ENCODE measurements at regions of chr17 and their contacts with region 1.

Region 1: DNA sequence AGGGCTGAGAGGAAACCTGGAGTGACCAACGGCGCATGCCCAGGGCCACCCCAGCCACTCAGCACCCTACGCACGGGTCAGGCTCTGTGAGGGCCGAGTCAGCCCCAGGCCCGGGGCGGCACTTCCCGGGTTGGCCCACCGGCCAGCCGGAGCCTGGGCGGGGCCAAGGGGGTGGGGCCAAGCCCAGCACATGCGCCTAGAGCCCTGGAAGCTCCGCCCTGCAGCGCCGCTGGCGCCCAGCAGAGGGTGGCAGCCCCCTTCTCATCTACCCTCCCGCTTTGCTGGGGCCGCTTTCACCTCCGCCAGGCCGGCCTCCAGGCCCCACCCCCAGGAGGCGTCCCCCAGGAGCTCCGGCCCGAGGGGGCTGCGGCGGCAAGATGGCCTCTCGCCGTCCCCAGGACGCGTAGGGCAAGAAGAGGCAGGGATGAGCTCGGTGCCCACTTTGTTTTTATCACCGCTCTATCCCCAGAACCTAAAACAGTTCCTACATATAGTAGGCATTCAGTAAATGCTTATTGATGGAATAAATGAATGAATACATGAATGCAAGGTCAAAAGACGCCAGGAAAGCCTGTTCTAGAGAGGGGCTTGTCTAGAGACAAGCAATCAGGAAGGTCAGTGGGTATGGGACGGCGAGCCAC is 31.3 kb downstream of the MYO18A start:
- DNase-seq: peak; percentile 82 to 97 (median 89)
- ATAC-seq: peak; percentile 99
- H3K4me3 ChIP-seq: peak overlapping the region; percentile 58
- H3K4me3 Mint-ChIP-seq: peak overlapping the region; percentile 70 to 84 (median 77)
- H3K27ac ChIP-seq: peak overlapping the region; percentile 73
- H3K27ac Mint-ChIP-seq: peak overlapping the region; percentile 71 to 93 (median 87)
- H3K4me1 ChIP-seq: peaks cover 9 to 22% of the 10 kb centered on the region in 2 donors
- H3K4me1 Mint-ChIP-seq: peaks cover 37 to 59% (median 45%) of the 10 kb centered on the region in 7 donors
- H3K27me3 ChIP-seq: no peaks in the 10 kb centered on the region
- H3K27me3 Mint-ChIP-seq: no peaks in the 10 kb centered on the region

Region 2: GRCh38 chr17:29116804-29117772 is 31.8 kb before region 1 on chr17:
- CTCF ChIA-PET with region 1: interaction called, 27 read pairs
- POLR2A ChIA-PET with region 1: interaction called, 5 read pairs
- intact Hi-C with region 1: no loop called
- DNase-seq: peak; percentile 49 to 81 (median 69)
- ATAC-seq: peak; percentile 89
- H3K4me3 ChIP-seq: no peak overlapping the region
- H3K4me3 Mint-ChIP-seq: peak overlapping the region in 1 of 10 donors; percentile 44
- H3K27ac ChIP-seq: no peak overlapping the region
- H3K27ac Mint-ChIP-seq: peak overlapping the region in 5 of 9 donors; percentile 54 to 74 (median 61)
- H3K4me1 ChIP-seq: no peaks in the 10 kb centered on the region
- H3K4me1 Mint-ChIP-seq: peaks cover 0 to 11% (median 5%) of the 10 kb centered on the region in 7 donors
- H3K27me3 ChIP-seq: no peaks in the 10 kb centered on the region
- H3K27me3 Mint-ChIP-seq: no peaks in the 10 kb centered on the region

Region 3: DNA sequence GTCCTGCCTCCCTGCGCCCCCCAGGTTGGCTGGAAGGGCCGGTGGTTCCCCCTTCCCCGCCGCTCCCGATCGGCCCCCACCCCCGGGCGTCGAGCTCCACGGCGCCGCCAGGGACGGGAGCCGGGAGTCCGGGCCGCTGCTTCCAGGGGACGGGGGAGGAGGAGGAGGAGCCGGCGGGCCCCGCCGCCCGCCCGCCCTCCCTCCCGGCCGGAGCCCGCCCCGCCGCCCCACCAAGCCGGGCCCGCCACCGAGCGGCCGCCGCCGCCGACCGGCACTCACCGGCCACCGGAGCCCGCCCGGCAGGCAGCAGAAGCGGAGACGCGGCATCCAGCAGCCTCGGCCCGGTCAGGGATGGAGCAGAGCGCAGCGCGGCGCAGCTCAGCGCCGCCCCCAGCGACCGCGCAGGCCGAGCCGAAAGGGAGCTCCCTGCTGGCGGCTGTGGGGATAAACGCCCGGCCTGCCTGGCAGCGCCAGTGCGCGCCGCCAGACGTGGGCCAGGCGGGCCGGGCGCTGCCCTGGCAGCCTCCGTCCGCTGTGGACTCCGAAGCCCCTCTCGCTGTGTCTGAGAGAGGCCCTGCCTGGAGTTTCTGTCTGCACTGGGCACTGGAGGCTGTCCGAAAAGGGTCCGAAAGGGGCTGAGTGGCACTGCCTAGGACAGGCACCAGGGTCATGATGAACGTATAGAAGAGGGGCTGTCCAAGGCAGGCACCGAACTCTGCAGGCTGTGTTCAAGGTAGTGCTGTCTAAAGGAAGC is 31.3 kb after region 1 on chr17 and contains the start of gene MYO18A:
- CTCF ChIA-PET with region 1: interaction called, 230 read pairs
- POLR2A ChIA-PET with region 1: interaction called, 27 read pairs
- intact Hi-C with region 1: loop called (anchors 1 kb)
- DNase-seq: peak; percentile 58 to 85 (median 71)
- ATAC-seq: peak; percentile 98
- H3K4me3 ChIP-seq: peak within 1 kb of the TSS; percentile 37
- H3K4me3 Mint-ChIP-seq: peak within 1 kb of the TSS; percentile 40 to 82 (median 56)
- H3K27ac ChIP-seq: no peak within 1 kb of the TSS
- H3K27ac Mint-ChIP-seq: peak within 1 kb of the TSS in 7 of 9 donors; percentile 9 to 70 (median 48)
- H3K4me1 ChIP-seq: peaks cover 10 to 13% of the 10 kb centered on the region in 2 donors
- H3K4me1 Mint-ChIP-seq: peaks cover 5 to 33% (median 19%) of the 10 kb centered on the region in 7 donors
- H3K27me3 ChIP-seq: no peaks in the 10 kb centered on the region
- H3K27me3 Mint-ChIP-seq: peaks cover 0 to 13% (median 0%) of the 10 kb centered on the region in 5 donors
- total RNA-seq, gene MYO18A: 89.5 to 144 (median 103) TPM

Region 4: GRCh38 chr17:29369831-29370735 is 221.2 kb after region 1 on chr17:
- CTCF ChIA-PET with region 1: interaction called, 12 read pairs
- POLR2A ChIA-PET with region 1: no interaction called
- intact Hi-C with region 1: loop called in 1 of 2 experiments (anchors 1 kb)
- DNase-seq: peak; percentile 25 to 80 (median 67)
- ATAC-seq: peak; percentile 95
- H3K4me3 ChIP-seq: no peak overlapping the region
- H3K4me3 Mint-ChIP-seq: no peak overlapping the region
- H3K27ac ChIP-seq: peak overlapping the region; percentile 63
- H3K27ac Mint-ChIP-seq: no peak overlapping the region
- H3K4me1 ChIP-seq: no peaks in the 10 kb centered on the region
- H3K4me1 Mint-ChIP-seq: no peaks in the 10 kb centered on the region
- H3K27me3 ChIP-seq: no peaks in the 10 kb centered on the region
- H3K27me3 Mint-ChIP-seq: peaks cover 0 to 2% (median 0%) of the 10 kb centered on the region in 5 donors

Region 5: DNA sequence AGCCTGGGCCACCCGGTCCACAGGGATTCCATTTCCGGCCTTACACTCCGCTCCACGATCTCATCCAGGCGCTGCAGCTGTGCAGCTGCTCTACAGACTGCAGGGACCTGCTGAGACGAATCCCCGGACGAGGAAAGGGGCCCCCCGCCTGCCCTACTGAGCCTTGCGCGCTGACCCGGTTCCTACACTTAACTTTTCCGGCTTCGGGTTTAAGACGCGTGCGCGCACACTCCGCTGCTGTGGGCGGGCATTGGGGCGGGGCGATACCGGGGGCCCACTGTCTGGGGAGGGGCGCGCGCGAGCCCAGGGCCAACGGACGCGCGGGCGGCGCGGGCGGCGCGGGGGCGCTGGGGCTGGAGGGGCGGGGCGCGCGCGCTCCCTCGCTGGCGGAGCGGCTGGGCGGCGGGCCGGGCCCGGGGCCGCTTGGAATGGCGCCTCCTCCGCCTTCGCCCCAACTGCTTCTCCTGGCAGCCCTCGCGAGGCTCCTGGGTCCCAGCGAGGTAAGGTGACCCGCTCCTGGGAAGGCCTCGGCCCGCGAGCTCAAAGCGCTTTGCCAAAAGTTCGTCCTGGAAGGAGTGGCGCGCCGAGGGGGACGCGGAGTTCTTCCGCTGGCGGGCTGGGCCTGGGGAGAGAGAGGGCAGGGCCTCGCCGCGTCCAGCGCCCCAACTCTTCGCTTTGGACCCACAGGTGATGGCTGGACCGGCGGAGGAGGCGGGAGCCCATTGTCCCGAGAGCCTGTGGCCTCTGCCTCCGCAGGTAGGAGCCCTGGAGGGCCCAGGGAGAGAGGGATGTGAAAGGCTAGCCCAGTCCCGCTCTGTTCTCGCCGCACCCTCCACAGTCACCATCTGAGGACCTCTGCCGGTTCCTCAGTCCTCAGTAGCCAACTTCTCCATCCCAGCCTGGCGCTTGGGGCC is 419.7 kb after region 1 on chr17 and contains the start of gene TP53I13:
- CTCF ChIA-PET with region 1: no interaction called
- POLR2A ChIA-PET with region 1: no interaction called
- intact Hi-C with region 1: loop called (anchors 10 kb)
- DNase-seq: peak; percentile 65 to 90 (median 81)
- ATAC-seq: peak; percentile 81
- H3K4me3 ChIP-seq: peak within 1 kb of the TSS; percentile 89
- H3K4me3 Mint-ChIP-seq: peak within 1 kb of the TSS; percentile 88 to 99 (median 95)
- H3K27ac ChIP-seq: peak within 1 kb of the TSS; percentile 78
- H3K27ac Mint-ChIP-seq: peak within 1 kb of the TSS; percentile 82 to 97 (median 92)
- H3K4me1 ChIP-seq: peaks cover 12 to 30% of the 10 kb centered on the region in 2 donors
- H3K4me1 Mint-ChIP-seq: peaks cover 21 to 42% (median 32%) of the 10 kb centered on the region in 7 donors
- H3K27me3 ChIP-seq: no peaks in the 10 kb centered on the region
- H3K27me3 Mint-ChIP-seq: no peaks in the 10 kb centered on the region
- total RNA-seq, gene TP53I13: 61.6 to 87.5 (median 62.8) TPM

Measured in naive thymus-derived CD4-positive, alpha-beta T cell (primary cell).